SK-N-SH (cell line): ENCODE measurements at regions of chrX and their contacts with region 1.

Region 1: DNA sequence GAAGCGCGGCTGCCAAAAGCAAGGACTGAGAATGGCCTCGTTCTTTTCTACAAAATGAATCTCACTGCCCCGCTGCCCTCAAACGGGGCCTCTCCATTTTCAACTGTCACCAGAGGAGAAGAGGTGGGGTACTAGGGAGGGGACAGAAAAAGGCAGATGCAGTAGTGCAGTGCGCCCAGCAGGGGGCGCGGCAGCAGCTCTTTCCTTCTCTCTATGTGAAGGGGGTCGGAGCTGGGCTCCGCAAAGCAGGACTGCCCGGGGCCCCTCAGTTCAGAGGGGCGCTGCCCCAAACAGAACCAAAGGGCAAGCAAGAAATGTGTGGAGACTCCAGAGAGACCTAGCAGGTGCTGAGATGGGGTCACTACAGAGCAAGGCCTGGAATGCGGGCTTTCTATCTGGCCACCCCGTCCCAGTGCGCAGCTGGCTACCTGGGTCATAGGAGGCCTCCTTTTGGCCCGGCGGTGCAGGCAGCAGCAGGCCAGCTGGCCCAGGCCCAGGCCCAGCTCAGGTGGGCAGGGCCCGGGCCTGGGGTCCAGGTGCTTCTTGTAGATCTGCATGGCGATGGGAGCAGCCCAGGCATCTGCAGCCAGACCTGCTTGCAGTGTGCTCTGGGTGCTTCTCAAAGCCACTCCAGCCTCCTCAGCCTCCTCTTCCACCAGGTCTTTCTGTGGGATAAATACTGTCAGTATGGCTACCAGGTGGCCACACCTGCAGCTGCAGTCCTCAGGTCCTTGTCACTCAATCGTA is 5.9 kb downstream of the IRAK1 start:
- DNase-seq: peak; percentile 88
- H3K4me3 ChIP-seq: peak overlapping the region in 1 of 2 experiments; percentile 17; a peak in 1 of 4 replicates
- H3K27ac ChIP-seq: no peak overlapping the region
- H3K4me1 ChIP-seq: peaks cover 0 to 7% of the 10 kb centered on the region in 2 experiments; a peak in 1 of 4 replicates
- H3K27me3 ChIP-seq: no peaks in the 10 kb centered on the region
- CTCF ChIP-seq: peak; percentile 98
- EP300 ChIP-seq: no peak
- RAD21 ChIP-seq: peak; percentile 62

Region 2: DNA sequence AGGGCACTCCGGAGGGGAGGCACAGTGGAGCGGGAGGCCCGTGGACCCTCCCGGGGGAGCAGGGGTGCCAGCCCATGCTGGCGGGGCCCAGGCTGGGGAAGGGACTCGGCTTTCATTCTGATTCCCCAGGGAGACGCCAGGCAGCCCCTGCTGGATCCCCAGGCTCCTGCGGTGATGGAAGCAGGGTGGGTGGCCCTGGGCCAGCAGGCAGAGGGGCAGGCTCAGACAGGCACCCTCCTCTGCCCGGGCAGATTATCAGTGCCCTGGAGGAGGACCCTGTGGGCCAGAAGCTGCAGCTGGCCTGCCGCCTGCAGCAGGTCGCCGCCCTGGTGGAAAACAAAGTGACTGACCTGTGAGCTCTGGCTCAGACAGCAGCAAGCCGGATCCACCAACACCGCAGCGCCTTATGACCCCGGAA is 235.1 kb before region 1 on chrX:
- CTCF ChIA-PET with region 1: no interaction called
- POLR2A ChIA-PET with region 1: no interaction called
- DNase-seq: no peak
- H3K4me3 ChIP-seq: no peak overlapping the region
- H3K27ac ChIP-seq: no peak overlapping the region
- H3K4me1 ChIP-seq: peaks cover 0 to 12% of the 10 kb centered on the region in 2 experiments; a peak in 1 of 4 replicates
- H3K27me3 ChIP-seq: 0 out of 2 replicates have a peak, but pooled peaks cover 7% of the 10 kb centered on the region
- CTCF ChIP-seq: peak; percentile 22; the same call in 1 of the 2 replicates
- EP300 ChIP-seq: no peak
- RAD21 ChIP-seq: no peak

Region 3: GRCh38 chrX:153989973-153990655 is 23.7 kb before region 1 on chrX:
- CTCF ChIA-PET with region 1: interaction called, 16 read pairs
- POLR2A ChIA-PET with region 1: no interaction called
- DNase-seq: no peak
- H3K4me3 ChIP-seq: no peak overlapping the region
- H3K27ac ChIP-seq: no peak overlapping the region
- H3K4me1 ChIP-seq: peaks cover 0 to 3% of the 10 kb centered on the region in 2 experiments; a peak in 1 of 4 replicates
- H3K27me3 ChIP-seq: peaks cover 11% of the 10 kb centered on the region
- CTCF ChIP-seq: no peak
- EP300 ChIP-seq: no peak
- RAD21 ChIP-seq: no peak

Region 4: DNA sequence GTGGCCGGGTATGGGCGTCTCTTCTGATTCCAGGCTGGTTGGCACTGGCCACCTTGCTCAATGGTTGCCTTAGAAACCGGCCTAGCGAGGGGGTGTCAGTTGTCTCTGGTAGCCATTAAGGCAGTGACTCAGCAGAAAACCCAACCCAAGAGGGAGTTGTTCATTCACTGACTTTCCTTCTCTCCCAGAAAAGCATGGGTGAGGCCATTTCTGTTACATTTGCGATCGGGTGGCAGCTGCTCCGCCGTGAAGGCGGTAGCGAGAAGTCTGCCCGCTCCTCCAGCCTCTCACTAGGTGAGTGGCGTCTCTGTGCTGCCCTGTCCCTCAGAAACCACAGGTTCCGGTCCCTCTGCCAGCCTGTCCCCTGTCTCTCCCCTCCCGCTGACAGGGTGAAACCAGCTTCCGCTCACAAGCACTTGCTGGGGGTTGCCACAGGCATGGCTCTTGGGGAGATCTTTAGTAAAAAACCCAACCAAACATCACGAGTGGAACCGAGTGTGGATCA is 11.5 kb before region 1 on chrX:
- CTCF ChIA-PET with region 1: interaction called, 43 read pairs
- POLR2A ChIA-PET with region 1: no interaction called
- DNase-seq: no peak
- H3K4me3 ChIP-seq: no peak overlapping the region
- H3K27ac ChIP-seq: peak overlapping the region; percentile 17 to 46; a peak in 1 of 4 replicates
- H3K4me1 ChIP-seq: peaks cover 5 to 6% of the 10 kb centered on the region in 2 experiments; a peak in 2 of 4 replicates
- H3K27me3 ChIP-seq: peaks cover 9% of the 10 kb centered on the region; the same call in 1 of the 2 replicates
- CTCF ChIP-seq: no peak
- EP300 ChIP-seq: no peak
- RAD21 ChIP-seq: no peak

Region 5: GRCh38 chrX:154040307-154040756 is 26.5 kb after region 1 on chrX:
- CTCF ChIA-PET with region 1: interaction called, 30 read pairs
- POLR2A ChIA-PET with region 1: no interaction called
- DNase-seq: no peak
- H3K4me3 ChIP-seq: no peak overlapping the region
- H3K27ac ChIP-seq: peak overlapping the region in 1 of 2 experiments; percentile 46; a peak in 1 of 4 replicates
- H3K4me1 ChIP-seq: peaks cover 4 to 8% of the 10 kb centered on the region in 2 experiments; a peak in 2 of 4 replicates
- H3K27me3 ChIP-seq: no peaks in the 10 kb centered on the region; the same call in 1 of the 2 replicates
- CTCF ChIP-seq: no peak
- EP300 ChIP-seq: no peak
- RAD21 ChIP-seq: no peak

Region 6: DNA sequence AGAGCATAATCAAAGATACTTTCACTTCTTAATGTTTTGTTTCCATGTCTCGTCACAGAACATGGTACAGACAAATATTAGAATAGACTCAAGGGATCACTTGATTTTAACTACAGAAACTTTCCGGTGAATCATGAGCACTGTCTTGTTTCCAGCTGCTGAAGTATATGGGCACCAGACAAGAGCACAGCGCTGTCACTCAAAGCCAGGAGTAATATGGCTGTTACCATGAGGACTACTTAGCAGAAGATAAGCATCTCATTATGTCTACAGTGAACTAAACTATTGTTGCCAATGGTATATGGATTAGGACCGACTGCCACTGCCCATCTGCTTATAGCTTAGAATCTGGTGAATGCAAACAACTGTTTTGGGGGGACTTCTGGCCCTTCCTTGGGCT is 49.4 kb after region 1 on chrX:
- CTCF ChIA-PET with region 1: interaction called, 13 read pairs
- POLR2A ChIA-PET with region 1: no interaction called
- DNase-seq: no peak
- H3K4me3 ChIP-seq: no peak overlapping the region
- H3K27ac ChIP-seq: no peak overlapping the region
- H3K4me1 ChIP-seq: no peaks in the 10 kb centered on the region; a peak in 1 of 4 replicates
- H3K27me3 ChIP-seq: peaks cover 9% of the 10 kb centered on the region
- CTCF ChIP-seq: no peak
- EP300 ChIP-seq: no peak
- RAD21 ChIP-seq: no peak